ENCODE measurements at regions of chr19 and their contacts with region 1.

Region 1: GRCh38 chr19:14419106-14419813 is at the start of gene DDX39A:
- DNase-seq: peak; percentile 95 to 99 (median 99)
- H3K4me3 ChIP-seq: peak within 1 kb of the TSS; percentile 80 to 84
- H3K4me3 Mint-ChIP-seq: peak within 1 kb of the TSS; percentile 88 to 99 (median 92)
- H3K27ac ChIP-seq: peak within 1 kb of the TSS; percentile 87
- H3K27ac Mint-ChIP-seq: peak within 1 kb of the TSS; percentile 94 to 98 (median 97)
- H3K4me1 ChIP-seq: peaks cover 40% of the 10 kb centered on the region
- H3K4me1 Mint-ChIP-seq: peaks cover 20 to 47% (median 34%) of the 10 kb centered on the region in 4 donors
- H3K27me3 ChIP-seq: no peaks in the 10 kb centered on the region
- H3K27me3 Mint-ChIP-seq: no peaks in the 10 kb centered on the region
- total RNA-seq, gene DDX39A: 148 TPM

Region 2: GRCh38 chr19:14081325-14082093 is 337.8 kb before region 1 on chr19:
- CTCF ChIA-PET with region 1: no interaction called
- POLR2A ChIA-PET with region 1: no interaction called
- intact Hi-C with region 1: loop called (anchors 2 kb)
- DNase-seq: peak; percentile 98 to 99 (median 99)
- H3K4me3 ChIP-seq: peak overlapping the region; percentile 61 to 74
- H3K4me3 Mint-ChIP-seq: peak overlapping the region; percentile 87 to 97 (median 92)
- H3K27ac ChIP-seq: peak overlapping the region; percentile 68
- H3K27ac Mint-ChIP-seq: peak overlapping the region; percentile 84 to 98 (median 95)
- H3K4me1 ChIP-seq: peaks cover 18% of the 10 kb centered on the region
- H3K4me1 Mint-ChIP-seq: peaks cover 5 to 28% (median 17%) of the 10 kb centered on the region in 4 donors
- H3K27me3 ChIP-seq: no peaks in the 10 kb centered on the region
- H3K27me3 Mint-ChIP-seq: no peaks in the 10 kb centered on the region

Region 3: GRCh38 chr19:14325863-14326262 is 93.4 kb before region 1 on chr19:
- CTCF ChIA-PET with region 1: no interaction called
- POLR2A ChIA-PET with region 1: no interaction called
- intact Hi-C with region 1: no loop called
- DNase-seq: no peak
- H3K4me3 ChIP-seq: no peak overlapping the region
- H3K4me3 Mint-ChIP-seq: no peak overlapping the region
- H3K27ac ChIP-seq: no peak overlapping the region
- H3K27ac Mint-ChIP-seq: no peak overlapping the region
- H3K4me1 ChIP-seq: no peaks in the 10 kb centered on the region
- H3K4me1 Mint-ChIP-seq: no peaks in the 10 kb centered on the region
- H3K27me3 ChIP-seq: no peaks in the 10 kb centered on the region
- H3K27me3 Mint-ChIP-seq: no peaks in the 10 kb centered on the region

Region 4: GRCh38 chr19:14366498-14366915 is 52.8 kb before region 1 on chr19:
- CTCF ChIA-PET with region 1: interaction called, 5 read pairs
- POLR2A ChIA-PET with region 1: interaction called, 28 read pairs
- intact Hi-C with region 1: loop called (anchors 2 kb)
- DNase-seq: peak; percentile 92 to 96 (median 94)
- H3K4me3 ChIP-seq: peak overlapping the region in 1 of 2 donors; percentile 54
- H3K4me3 Mint-ChIP-seq: peak overlapping the region; percentile 55 to 92 (median 80)
- H3K27ac ChIP-seq: peak overlapping the region; percentile 100
- H3K27ac Mint-ChIP-seq: peak overlapping the region; percentile 89 to 100 (median 97)
- H3K4me1 ChIP-seq: peaks cover 92% of the 10 kb centered on the region
- H3K4me1 Mint-ChIP-seq: peaks cover 42 to 76% (median 58%) of the 10 kb centered on the region in 4 donors
- H3K27me3 ChIP-seq: no peaks in the 10 kb centered on the region
- H3K27me3 Mint-ChIP-seq: no peaks in the 10 kb centered on the region

Region 5: GRCh38 chr19:14383661-14384555 is 35.4 kb before region 1 on chr19:
- CTCF ChIA-PET with region 1: no interaction called
- POLR2A ChIA-PET with region 1: interaction called, 36 read pairs
- intact Hi-C with region 1: loop called (anchors 1 kb)
- DNase-seq: peak in 3 of 5 donors; percentile 40 to 91 (median 41)
- H3K4me3 ChIP-seq: peak overlapping the region; percentile 40 to 82
- H3K4me3 Mint-ChIP-seq: peak overlapping the region; percentile 91 to 99 (median 98)
- H3K27ac ChIP-seq: peak overlapping the region; percentile 99
- H3K27ac Mint-ChIP-seq: peak overlapping the region; percentile 96 to 100 (median 98)
- H3K4me1 ChIP-seq: peaks cover 41% of the 10 kb centered on the region
- H3K4me1 Mint-ChIP-seq: peaks cover 19 to 66% (median 37%) of the 10 kb centered on the region in 4 donors
- H3K27me3 ChIP-seq: no peaks in the 10 kb centered on the region
- H3K27me3 Mint-ChIP-seq: peaks cover 0 to 4% of the 10 kb centered on the region in 2 donors

Region 6: DNA sequence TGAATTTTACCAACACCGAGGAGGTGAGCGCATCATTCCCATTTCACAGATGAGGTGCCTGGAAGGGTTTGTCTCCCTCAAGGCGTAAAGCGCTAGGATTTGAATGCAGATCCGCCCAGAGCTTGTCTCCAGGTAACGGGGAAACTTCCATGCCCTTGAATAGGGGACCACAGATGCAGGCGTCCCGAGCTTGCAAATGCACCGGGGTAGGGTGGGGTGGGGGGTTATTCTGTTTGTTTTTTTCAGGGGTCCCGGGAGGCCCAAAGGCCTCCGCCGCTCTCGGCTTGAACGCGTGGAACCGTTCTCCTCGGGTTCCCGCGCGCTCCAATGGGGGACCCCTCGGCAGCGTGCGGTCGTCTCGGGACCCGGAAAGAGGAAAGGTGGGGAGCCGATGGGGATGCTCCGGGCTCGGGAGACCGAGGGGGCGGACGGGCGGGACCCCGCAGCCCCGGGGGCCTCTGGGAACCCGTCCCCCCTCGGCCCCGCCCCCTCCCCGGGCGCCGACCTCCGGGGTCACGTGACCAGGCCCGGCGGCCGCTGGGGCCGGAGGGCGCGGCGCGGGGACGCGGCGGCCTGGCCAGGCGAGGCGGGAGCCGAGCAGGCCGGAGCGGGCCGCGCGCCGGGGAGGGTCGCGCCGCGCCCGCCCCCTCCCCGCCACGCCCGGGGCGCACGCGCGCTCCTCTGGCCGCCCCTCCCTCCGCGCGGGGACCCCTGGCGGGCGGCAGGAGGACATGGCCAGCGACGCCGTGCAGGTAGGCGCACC is 13.7 kb after region 1 on chr19 and contains the start of gene PKN1:
- CTCF ChIA-PET with region 1: interaction called, 33 read pairs
- POLR2A ChIA-PET with region 1: interaction called, 10 read pairs
- intact Hi-C with region 1: loop called (anchors 1 kb)
- DNase-seq: peak in 3 of 5 donors; percentile 20 to 55 (median 22)
- H3K4me3 ChIP-seq: peak within 1 kb of the TSS; percentile 60 to 61
- H3K4me3 Mint-ChIP-seq: peak within 1 kb of the TSS; percentile 83 to 93 (median 88)
- H3K27ac ChIP-seq: peak within 1 kb of the TSS; percentile 72
- H3K27ac Mint-ChIP-seq: peak within 1 kb of the TSS; percentile 84 to 95 (median 89)
- H3K4me1 ChIP-seq: peaks cover 31% of the 10 kb centered on the region
- H3K4me1 Mint-ChIP-seq: peaks cover 16 to 49% (median 33%) of the 10 kb centered on the region in 4 donors
- H3K27me3 ChIP-seq: no peaks in the 10 kb centered on the region
- H3K27me3 Mint-ChIP-seq: no peaks in the 10 kb centered on the region
- total RNA-seq, gene PKN1: 189 to 205 TPM

Region 7: DNA sequence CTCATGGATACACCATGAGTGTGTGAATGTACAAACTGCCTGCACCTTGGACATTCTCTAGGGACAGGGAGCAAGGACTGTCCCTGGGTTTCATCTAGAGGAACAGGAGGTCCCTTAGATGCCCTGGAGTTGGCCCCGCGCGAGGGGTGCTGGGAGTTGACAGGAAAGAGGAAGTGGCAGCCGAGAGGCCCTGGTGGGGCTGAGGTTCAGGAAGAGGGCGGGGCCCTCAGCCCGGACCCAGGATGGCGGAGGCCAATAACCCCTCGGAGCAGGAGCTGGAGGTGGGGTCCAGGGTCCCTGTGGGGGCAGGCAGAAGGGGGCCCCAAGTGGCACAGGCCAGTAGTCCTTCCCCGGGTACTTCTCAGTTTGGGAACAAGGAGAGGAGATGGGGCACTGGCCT is 20.8 kb after region 1 on chr19:
- CTCF ChIA-PET with region 1: interaction called, 4 read pairs
- POLR2A ChIA-PET with region 1: interaction called, 12 read pairs
- intact Hi-C with region 1: loop called (anchors 1 kb)
- DNase-seq: peak; percentile 67 to 82 (median 71)
- H3K4me3 ChIP-seq: peak overlapping the region; percentile 70 to 86
- H3K4me3 Mint-ChIP-seq: peak overlapping the region; percentile 92 to 98 (median 95)
- H3K27ac ChIP-seq: peak overlapping the region; percentile 77
- H3K27ac Mint-ChIP-seq: peak overlapping the region; percentile 82 to 97 (median 95)
- H3K4me1 ChIP-seq: peaks cover 52% of the 10 kb centered on the region
- H3K4me1 Mint-ChIP-seq: peaks cover 28 to 70% (median 48%) of the 10 kb centered on the region in 4 donors
- H3K27me3 ChIP-seq: no peaks in the 10 kb centered on the region
- H3K27me3 Mint-ChIP-seq: no peaks in the 10 kb centered on the region

Region 8: GRCh38 chr19:14472202-14472938 is 53.1 kb after region 1 on chr19:
- CTCF ChIA-PET with region 1: interaction called, 3 read pairs
- POLR2A ChIA-PET with region 1: interaction called, 14 read pairs
- intact Hi-C with region 1: loop called (anchors 5 kb)
- DNase-seq: peak; percentile 78 to 84 (median 79)
- H3K4me3 ChIP-seq: peak overlapping the region in 1 of 2 donors; percentile 19
- H3K4me3 Mint-ChIP-seq: peak overlapping the region in 7 of 8 donors; percentile 25 to 76 (median 61)
- H3K27ac ChIP-seq: no peak overlapping the region
- H3K27ac Mint-ChIP-seq: no peak overlapping the region
- H3K4me1 ChIP-seq: peaks cover 36% of the 10 kb centered on the region
- H3K4me1 Mint-ChIP-seq: peaks cover 14 to 35% (median 25%) of the 10 kb centered on the region in 4 donors
- H3K27me3 ChIP-seq: peaks cover 14% of the 10 kb centered on the region
- H3K27me3 Mint-ChIP-seq: peaks cover 7 to 20% of the 10 kb centered on the region in 2 donors

Region 9: GRCh38 chr19:14563989-14564651 is 144.9 kb after region 1 on chr19:
- CTCF ChIA-PET with region 1: no interaction called
- POLR2A ChIA-PET with region 1: no interaction called
- intact Hi-C with region 1: no loop called
- DNase-seq: peak in 4 of 5 donors; percentile 19 to 38 (median 26)
- H3K4me3 ChIP-seq: no peak overlapping the region
- H3K4me3 Mint-ChIP-seq: peak overlapping the region in 1 of 8 donors; percentile 25
- H3K27ac ChIP-seq: no peak overlapping the region
- H3K27ac Mint-ChIP-seq: peak overlapping the region in 5 of 7 donors; percentile 22 to 77 (median 42)
- H3K4me1 ChIP-seq: no peaks in the 10 kb centered on the region
- H3K4me1 Mint-ChIP-seq: peaks cover 11 to 28% (median 17%) of the 10 kb centered on the region in 4 donors
- H3K27me3 ChIP-seq: no peaks in the 10 kb centered on the region
- H3K27me3 Mint-ChIP-seq: no peaks in the 10 kb centered on the region

Measured in CD4-positive, alpha-beta memory T cell (primary cell).